ENCODE measurements at regions of chr19 and their contacts with region 1.

Region 1: GRCh38 chr19:9329999-9330398 is 6.0 kb downstream of the ZNF559 start:
- DNase-seq: no peak
- ATAC-seq: no peak
- H3K4me3 ChIP-seq: no peak overlapping the region
- H3K27ac ChIP-seq: no peak overlapping the region
- H3K4me1 ChIP-seq: no peaks in the 10 kb centered on the region
- H3K27me3 ChIP-seq: no peaks in the 10 kb centered on the region

Region 2: DNA sequence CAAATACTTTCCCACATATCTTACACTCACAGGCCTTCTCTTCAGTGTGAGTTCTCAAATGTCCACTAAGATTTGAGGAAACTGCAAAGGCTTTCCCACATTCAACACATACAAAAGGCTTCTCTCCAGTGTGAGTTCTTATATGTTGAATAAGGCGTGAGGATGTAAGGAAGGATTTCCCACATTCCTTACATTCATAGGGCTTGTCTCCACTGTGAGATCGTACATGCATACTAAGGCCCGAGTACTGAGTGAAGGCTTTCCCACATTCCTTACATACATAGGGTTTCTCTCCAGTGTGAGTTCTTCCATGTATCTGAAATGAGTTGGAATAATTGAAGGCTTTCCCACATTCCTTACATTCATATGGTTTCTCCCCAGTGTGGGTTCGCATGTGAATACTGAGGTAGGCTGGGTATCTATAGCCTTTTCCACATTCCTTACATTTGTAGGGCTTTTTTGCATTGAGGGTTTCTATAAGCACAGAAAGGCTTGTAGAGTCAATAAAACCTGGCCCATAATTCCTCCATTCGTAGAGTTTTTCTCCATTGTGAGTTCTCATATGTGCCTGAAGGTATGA is 198.8 kb after region 1 on chr19:
- intact Hi-C with region 1: loop called in 1 of 4 experiments (anchors 10 kb)
- DNase-seq: no peak
- ATAC-seq: no peak
- H3K4me3 ChIP-seq: peak overlapping the region; percentile 25
- H3K27ac ChIP-seq: no peak overlapping the region
- H3K4me1 ChIP-seq: no peaks in the 10 kb centered on the region
- H3K27me3 ChIP-seq: no peaks in the 10 kb centered on the region

Measured in right cardiac atrium (tissue), 5 donors.